ENCODE measurements at regions of chr1 and their contacts with region 1.

Region 1: DNA sequence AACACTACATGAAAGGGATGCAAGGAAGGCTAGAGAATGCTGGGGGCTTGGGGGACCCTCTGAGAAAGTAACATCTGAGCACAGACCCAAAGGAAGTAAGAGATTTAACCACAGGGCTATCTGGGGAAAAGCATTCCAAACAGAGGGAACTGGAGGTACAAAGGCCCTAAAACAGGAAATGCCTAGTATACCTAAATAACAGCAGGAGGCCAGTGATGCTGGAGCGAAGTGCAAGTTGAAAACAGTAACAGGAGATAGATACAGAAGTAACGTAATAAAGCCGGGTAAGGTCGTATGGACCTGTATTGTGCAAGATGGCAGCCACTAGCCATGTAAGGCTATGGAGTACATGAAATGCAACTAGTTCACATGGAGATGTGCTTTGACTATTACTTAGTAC is 52.1 kb downstream of the CD34 start:
- DNase-seq: peak; percentile 27
- H3K4me3 ChIP-seq: no peak overlapping the region
- H3K27ac ChIP-seq: no peak overlapping the region
- H3K4me1 ChIP-seq: peaks cover 20% of the 10 kb centered on the region
- H3K27me3 ChIP-seq: no peaks in the 10 kb centered on the region
- CTCF ChIP-seq: no peak
- POLR2A ChIP-seq: no peak

Region 2: DNA sequence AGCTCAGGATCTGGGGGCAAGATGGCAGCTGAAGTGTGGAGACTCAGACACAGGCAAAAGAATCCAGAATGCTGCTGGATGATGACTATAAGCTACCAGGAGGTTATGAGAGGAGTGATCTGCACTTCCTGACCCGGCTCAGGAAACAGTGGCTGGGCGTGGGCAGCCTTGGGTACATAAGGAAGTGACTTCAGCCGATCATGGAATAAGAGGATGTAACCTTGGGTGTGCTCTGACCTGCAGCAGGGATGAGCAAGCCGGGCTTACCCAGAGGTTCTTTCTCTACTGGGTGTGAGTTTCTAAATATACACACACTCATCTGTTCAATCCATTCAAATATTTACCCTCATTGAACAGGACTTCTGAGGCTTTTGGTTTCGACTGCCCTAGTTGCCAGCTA is 10.6 kb before region 1 on chr1:
- CTCF ChIA-PET with region 1: interaction called, 634 read pairs
- POLR2A ChIA-PET with region 1: interaction called, 3 read pairs
- dilution Hi-C with region 1: no loop called
- intact Hi-C with region 1: loop called (anchors 1 kb)
- DNase-seq: peak; percentile 90
- H3K4me3 ChIP-seq: peak overlapping the region in 1 of 3 experiments; percentile 6
- H3K27ac ChIP-seq: peak overlapping the region; percentile 90
- H3K4me1 ChIP-seq: peaks cover 40% of the 10 kb centered on the region
- H3K27me3 ChIP-seq: no peaks in the 10 kb centered on the region
- CTCF ChIP-seq: no peak
- POLR2A ChIP-seq: peak; percentile 78